HepG2 (cell line): ENCODE measurements at regions of chr13 and their contacts with region 1.

Region 1: GRCh38 chr13:32627793-32628192 is 41.5 kb downstream of the PDS5B start:
- DNase-seq: no peak
- ATAC-seq: no peak
- H3K4me3 ChIP-seq: no peak overlapping the region
- H3K27ac ChIP-seq: no peak overlapping the region
- H3K4me1 ChIP-seq: peaks cover 36% of the 10 kb centered on the region
- H3K27me3 ChIP-seq: no peaks in the 10 kb centered on the region
- CTCF ChIP-seq: no peak
- EP300 ChIP-seq: no peak
- POLR2A ChIP-seq: no peak
- RAD21 ChIP-seq: no peak

Region 2: GRCh38 chr13:32330441-32330840 is 297.4 kb before region 1 on chr13:
- CTCF ChIA-PET with region 1: no interaction called
- POLR2A ChIA-PET with region 1: no interaction called
- in situ Hi-C with region 1: no loop called
- intact Hi-C with region 1: no loop called
- DNase-seq: no peak
- ATAC-seq: no peak
- H3K4me3 ChIP-seq: no peak overlapping the region
- H3K27ac ChIP-seq: no peak overlapping the region
- H3K4me1 ChIP-seq: 0 out of 2 replicates have a peak, but pooled peaks cover 5% of the 10 kb centered on the region
- H3K27me3 ChIP-seq: no peaks in the 10 kb centered on the region
- CTCF ChIP-seq: no peak
- EP300 ChIP-seq: no peak
- POLR2A ChIP-seq: no peak
- RAD21 ChIP-seq: no peak

Region 3: DNA sequence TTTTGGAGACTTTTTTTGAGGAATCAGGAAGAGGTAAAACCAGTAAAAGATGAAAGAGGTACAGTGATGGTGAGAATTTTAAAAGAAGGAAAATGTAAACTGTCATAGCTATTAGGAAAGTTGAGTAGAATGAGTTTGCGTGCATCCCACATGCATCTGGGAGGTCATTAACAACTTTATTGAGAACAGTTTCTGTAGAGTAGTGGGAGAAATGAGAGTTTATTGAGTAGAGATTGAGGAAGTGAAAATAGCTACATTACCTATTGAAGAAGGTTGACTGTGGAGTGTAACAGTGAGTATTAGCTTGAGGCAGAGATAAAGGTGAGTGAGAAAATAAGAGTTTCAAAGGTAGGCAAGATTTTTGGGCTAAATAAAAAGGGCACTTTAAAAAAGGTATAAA is 273.8 kb before region 1 on chr13:
- CTCF ChIA-PET with region 1: no interaction called
- POLR2A ChIA-PET with region 1: no interaction called
- in situ Hi-C with region 1: no loop called
- intact Hi-C with region 1: no loop called
- DNase-seq: no peak
- ATAC-seq: no peak
- H3K4me3 ChIP-seq: no peak overlapping the region
- H3K27ac ChIP-seq: no peak overlapping the region
- H3K4me1 ChIP-seq: peaks cover 9% of the 10 kb centered on the region
- H3K27me3 ChIP-seq: no peaks in the 10 kb centered on the region
- CTCF ChIP-seq: no peak
- EP300 ChIP-seq: no peak
- POLR2A ChIP-seq: no peak
- RAD21 ChIP-seq: no peak

Region 4: GRCh38 chr13:32594157-32594738 is 33.5 kb before region 1 on chr13:
- CTCF ChIA-PET with region 1: no interaction called
- POLR2A ChIA-PET with region 1: no interaction called
- in situ Hi-C with region 1: loop called (anchors 5 kb)
- intact Hi-C with region 1: no loop called
- DNase-seq: no peak
- ATAC-seq: no peak
- H3K4me3 ChIP-seq: no peak overlapping the region
- H3K27ac ChIP-seq: no peak overlapping the region
- H3K4me1 ChIP-seq: peaks cover 44% of the 10 kb centered on the region
- H3K27me3 ChIP-seq: no peaks in the 10 kb centered on the region
- CTCF ChIP-seq: no peak
- EP300 ChIP-seq: no peak
- POLR2A ChIP-seq: no peak
- RAD21 ChIP-seq: no peak

Region 5: DNA sequence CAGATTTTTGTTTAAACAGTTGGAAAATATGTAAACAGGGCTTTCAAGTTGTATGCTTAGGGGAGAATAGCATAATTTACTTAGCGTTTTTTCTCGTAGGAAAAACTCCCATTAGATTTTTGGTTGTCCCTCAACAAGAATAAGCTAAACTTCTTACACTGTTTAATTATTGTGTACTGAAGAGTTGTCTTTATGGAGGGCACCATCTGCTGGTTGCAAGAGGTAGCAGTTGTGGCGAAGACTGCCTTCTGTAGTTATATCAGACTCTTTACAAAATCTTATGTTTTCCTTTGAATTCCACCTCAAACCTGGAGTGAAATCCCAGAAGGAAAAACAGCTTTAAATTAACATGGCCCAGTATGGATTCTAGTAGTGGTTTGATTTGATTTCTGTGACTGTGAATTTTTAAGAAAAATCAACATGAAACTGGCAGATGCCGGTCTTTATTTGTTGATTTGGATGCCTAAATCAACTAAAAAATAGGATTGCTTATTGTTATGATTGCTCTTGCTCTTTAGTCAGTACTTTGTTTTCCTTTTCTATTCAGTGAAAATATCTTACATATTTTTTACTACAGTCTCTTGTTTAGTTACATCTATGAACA is 11.8 kb after region 1 on chr13:
- CTCF ChIA-PET with region 1: no interaction called
- POLR2A ChIA-PET with region 1: no interaction called
- in situ Hi-C with region 1: no loop called
- intact Hi-C with region 1: no loop called
- DNase-seq: peak; percentile 50
- ATAC-seq: peak; percentile 78
- H3K4me3 ChIP-seq: no peak overlapping the region
- H3K27ac ChIP-seq: no peak overlapping the region
- H3K4me1 ChIP-seq: peaks cover 27% of the 10 kb centered on the region
- H3K27me3 ChIP-seq: no peaks in the 10 kb centered on the region
- CTCF ChIP-seq: peak; percentile 75
- EP300 ChIP-seq: no peak
- POLR2A ChIP-seq: no peak
- RAD21 ChIP-seq: peak; percentile 53; the same call in 1 of the 2 replicates